Naive thymus-derived CD4-positive, alpha-beta T cell (primary cell): ENCODE measurements at regions of chr20 and their contacts with region 1.

Region 1: DNA sequence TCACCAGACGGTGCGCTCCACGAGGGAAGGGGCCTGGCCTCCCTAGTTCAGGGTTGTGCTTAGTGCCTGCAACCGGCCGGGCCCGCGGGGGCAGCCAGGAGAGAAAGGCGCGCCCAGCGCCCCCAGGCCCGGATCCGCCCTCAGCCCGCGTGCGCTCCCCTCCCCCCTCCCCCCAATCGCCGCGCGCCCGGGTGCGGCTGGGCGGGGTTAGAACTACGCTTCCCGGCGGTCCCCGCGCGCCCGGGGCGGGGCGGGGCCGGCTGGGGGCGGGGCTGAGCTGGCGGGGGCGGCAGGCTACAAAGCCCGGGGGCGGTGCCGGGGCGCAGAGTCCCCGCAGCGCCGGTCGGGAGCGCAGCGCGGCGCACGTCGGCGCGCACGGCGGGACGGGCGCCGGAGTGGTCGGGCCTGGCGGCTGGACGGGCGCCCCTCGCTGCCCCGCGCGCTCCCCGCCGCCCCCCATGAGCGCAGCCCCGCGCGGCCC is at the start of gene RBM38:
- DNase-seq: peak; percentile 64 to 89 (median 71)
- ATAC-seq: peak; percentile 83
- H3K4me3 ChIP-seq: peak within 1 kb of the TSS; percentile 99
- H3K4me3 Mint-ChIP-seq: peak within 1 kb of the TSS; percentile 90 to 99 (median 98)
- H3K27ac ChIP-seq: peak within 1 kb of the TSS; percentile 83
- H3K27ac Mint-ChIP-seq: peak within 1 kb of the TSS; percentile 92 to 100 (median 99)
- H3K4me1 ChIP-seq: peaks cover 45 to 47% of the 10 kb centered on the region in 2 donors
- H3K4me1 Mint-ChIP-seq: peaks cover 36 to 54% (median 45%) of the 10 kb centered on the region in 7 donors
- H3K27me3 ChIP-seq: no peaks in the 10 kb centered on the region
- H3K27me3 Mint-ChIP-seq: no peaks in the 10 kb centered on the region
- total RNA-seq, gene RBM38: 70.6 to 260 (median 127) TPM

Region 2: DNA sequence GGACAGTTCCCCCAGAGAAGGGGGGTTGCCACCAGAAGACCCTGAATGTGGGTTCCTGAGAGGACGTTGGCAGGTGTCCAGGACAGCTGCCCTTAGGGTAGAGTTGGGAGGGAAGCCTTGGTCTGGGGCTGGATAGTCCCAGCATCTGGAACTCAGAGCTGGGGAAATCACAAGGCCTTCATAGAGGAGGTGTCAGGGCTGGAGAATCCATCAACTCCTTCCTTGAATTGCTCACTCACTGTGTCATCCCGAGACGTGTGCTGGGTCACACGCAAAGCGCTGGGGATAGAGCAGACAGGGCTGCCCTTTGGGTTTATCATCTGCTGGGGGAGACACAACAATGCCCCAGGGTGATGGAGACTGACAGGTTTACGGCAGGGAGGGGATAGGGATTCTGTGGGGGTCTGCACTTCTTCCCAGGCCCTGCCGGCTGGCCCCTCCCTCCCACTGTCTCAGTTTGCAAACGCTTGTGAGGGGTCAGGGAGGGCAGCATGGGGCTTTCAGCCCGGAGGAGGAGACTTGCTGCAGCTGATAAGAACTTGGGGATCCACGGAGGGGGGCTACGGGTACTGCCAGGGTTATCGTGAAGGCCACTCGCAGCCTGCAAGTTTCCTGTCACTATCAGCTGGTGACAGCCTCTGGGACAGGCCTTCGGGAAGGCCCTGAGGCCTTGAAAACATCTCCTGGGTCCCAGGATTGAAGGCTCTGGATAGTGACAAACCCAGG is 18.7 kb after region 1 on chr20:
- CTCF ChIA-PET with region 1: interaction called, 5 read pairs
- POLR2A ChIA-PET with region 1: interaction called, 16 read pairs
- intact Hi-C with region 1: no loop called
- DNase-seq: peak in 1 of 9 donors; percentile 24
- ATAC-seq: no peak
- H3K4me3 ChIP-seq: no peak overlapping the region
- H3K4me3 Mint-ChIP-seq: no peak overlapping the region
- H3K27ac ChIP-seq: no peak overlapping the region
- H3K27ac Mint-ChIP-seq: peak overlapping the region in 7 of 9 donors; percentile 18 to 87 (median 59)
- H3K4me1 ChIP-seq: peaks cover 3 to 4% of the 10 kb centered on the region in 2 donors
- H3K4me1 Mint-ChIP-seq: peaks cover 10 to 33% (median 12%) of the 10 kb centered on the region in 7 donors
- H3K27me3 ChIP-seq: no peaks in the 10 kb centered on the region
- H3K27me3 Mint-ChIP-seq: no peaks in the 10 kb centered on the region

Region 3: DNA sequence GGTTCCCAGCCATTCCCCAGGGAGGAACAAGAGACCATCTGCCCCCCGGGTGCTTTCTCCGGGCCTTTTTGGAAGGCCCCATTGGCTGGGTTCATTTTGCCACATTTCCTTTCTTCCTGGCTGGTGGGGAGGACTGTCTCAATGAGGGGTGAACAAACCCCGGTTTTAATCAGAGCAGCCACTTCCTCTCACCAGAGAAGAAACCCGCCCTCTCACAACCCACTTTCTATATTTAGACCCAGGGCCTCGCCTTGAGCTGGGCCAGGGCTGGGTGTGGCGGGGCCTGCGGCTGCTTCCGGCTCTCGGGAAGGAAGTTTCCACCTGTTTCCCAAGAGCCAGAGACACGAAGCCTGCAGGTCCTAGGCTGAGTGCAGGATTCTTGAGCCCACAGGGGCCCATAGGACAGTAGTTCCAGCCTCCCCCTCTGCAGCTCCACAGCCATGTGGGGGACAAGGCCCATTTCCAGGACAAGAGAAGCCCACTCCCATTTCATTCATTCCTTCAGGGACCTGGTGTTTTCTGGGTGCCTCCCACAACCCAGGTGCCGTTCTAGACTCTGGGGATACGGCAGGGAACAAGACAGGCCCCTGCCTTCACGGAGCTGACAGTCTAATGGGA is 41.9 kb after region 1 on chr20:
- CTCF ChIA-PET with region 1: interaction called, 14 read pairs
- POLR2A ChIA-PET with region 1: interaction called, 120 read pairs
- intact Hi-C with region 1: loop called (anchors 1 kb)
- DNase-seq: peak in 8 of 9 donors; percentile 63 to 81 (median 76)
- ATAC-seq: peak; percentile 83
- H3K4me3 ChIP-seq: peak overlapping the region; percentile 34
- H3K4me3 Mint-ChIP-seq: peak overlapping the region; percentile 55 to 94 (median 78)
- H3K27ac ChIP-seq: peak overlapping the region; percentile 59
- H3K27ac Mint-ChIP-seq: peak overlapping the region; percentile 60 to 95 (median 90)
- H3K4me1 ChIP-seq: peaks cover 45 to 55% of the 10 kb centered on the region in 2 donors
- H3K4me1 Mint-ChIP-seq: peaks cover 49 to 77% (median 67%) of the 10 kb centered on the region in 7 donors
- H3K27me3 ChIP-seq: no peaks in the 10 kb centered on the region
- H3K27me3 Mint-ChIP-seq: peaks cover 0 to 7% (median 0%) of the 10 kb centered on the region in 5 donors

Region 4: DNA sequence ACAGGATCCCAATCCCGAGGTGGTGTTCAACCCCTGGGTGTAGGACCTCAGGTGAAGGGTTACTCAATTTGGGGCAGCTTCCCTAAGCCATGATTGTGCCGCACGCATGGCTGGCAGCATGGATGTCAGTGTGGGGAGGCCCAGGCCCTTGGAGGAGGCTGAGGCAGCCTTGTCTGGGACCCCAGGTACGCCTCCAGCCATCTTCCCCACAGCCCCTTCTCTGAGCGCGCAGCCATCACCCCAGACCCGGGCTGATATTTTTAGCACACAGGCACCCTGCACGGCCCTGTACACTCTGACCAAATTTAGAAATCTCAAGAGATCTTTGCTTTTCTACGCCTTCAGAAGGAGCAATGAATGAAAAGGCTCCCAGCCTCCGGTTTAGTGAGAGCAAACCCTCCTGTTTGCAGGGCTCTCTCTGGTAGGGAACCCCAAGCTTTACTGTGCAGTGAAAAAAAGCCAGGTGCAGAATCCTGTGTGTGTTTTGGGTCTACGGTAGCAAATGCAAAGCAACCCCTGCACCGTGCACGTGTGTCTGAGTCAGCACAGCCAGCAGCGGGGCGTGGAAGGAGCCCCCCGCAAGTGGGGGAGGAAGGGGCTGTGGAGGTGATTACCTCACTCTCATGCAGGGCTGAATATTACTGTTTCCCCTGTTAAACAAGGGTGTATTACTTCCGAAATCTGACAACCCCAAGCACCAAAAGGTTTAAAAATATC is 89.5 kb after region 1 on chr20:
- CTCF ChIA-PET with region 1: no interaction called
- POLR2A ChIA-PET with region 1: interaction called, 13 read pairs
- intact Hi-C with region 1: no loop called
- DNase-seq: peak in 6 of 9 donors; percentile 16 to 53 (median 36)
- ATAC-seq: peak; percentile 74
- H3K4me3 ChIP-seq: no peak overlapping the region
- H3K4me3 Mint-ChIP-seq: peak overlapping the region in 9 of 10 donors; percentile 49 to 81 (median 74)
- H3K27ac ChIP-seq: peak overlapping the region; percentile 47
- H3K27ac Mint-ChIP-seq: peak overlapping the region in 8 of 9 donors; percentile 48 to 87 (median 85)
- H3K4me1 ChIP-seq: peaks cover 7 to 26% of the 10 kb centered on the region in 2 donors
- H3K4me1 Mint-ChIP-seq: peaks cover 5 to 54% (median 31%) of the 10 kb centered on the region in 7 donors
- H3K27me3 ChIP-seq: no peaks in the 10 kb centered on the region
- H3K27me3 Mint-ChIP-seq: peaks cover 0 to 25% (median 0%) of the 10 kb centered on the region in 5 donors

Region 5: GRCh38 chr20:57718490-57719271 is 327.6 kb after region 1 on chr20:
- CTCF ChIA-PET with region 1: no interaction called
- POLR2A ChIA-PET with region 1: no interaction called
- intact Hi-C with region 1: loop called in 1 of 2 experiments (anchors 1 kb)
- DNase-seq: peak; percentile 59 to 90 (median 87)
- ATAC-seq: peak; percentile 98
- H3K4me3 ChIP-seq: peak overlapping the region; percentile 49
- H3K4me3 Mint-ChIP-seq: peak overlapping the region; percentile 53 to 79 (median 70)
- H3K27ac ChIP-seq: peak overlapping the region; percentile 52
- H3K27ac Mint-ChIP-seq: peak overlapping the region in 8 of 9 donors; percentile 41 to 81 (median 58)
- H3K4me1 ChIP-seq: peaks cover 5 to 7% of the 10 kb centered on the region in 2 donors
- H3K4me1 Mint-ChIP-seq: peaks cover 0 to 26% (median 12%) of the 10 kb centered on the region in 7 donors
- H3K27me3 ChIP-seq: no peaks in the 10 kb centered on the region
- H3K27me3 Mint-ChIP-seq: peaks cover 0 to 25% (median 0%) of the 10 kb centered on the region in 5 donors